ENCODE measurements at regions of chr9 and their contacts with region 1.

Region 1: GRCh38 chr9:77595426-77596095 is 52.6 kb downstream of the GNA14 start:
- DNase-seq: no peak
- H3K4me3 ChIP-seq: no peak overlapping the region
- H3K27ac ChIP-seq: no peak overlapping the region
- H3K4me1 ChIP-seq: peaks cover 0 to 13% (median 0%) of the 10 kb centered on the region in 4 donors
- H3K27me3 ChIP-seq: no peaks in the 10 kb centered on the region
- CTCF ChIP-seq: no peak

Region 2: GRCh38 chr9:77534376-77535057 is 61.0 kb before region 1 on chr9:
- intact Hi-C with region 1: loop called (anchors 2 kb)
- DNase-seq: no peak
- H3K4me3 ChIP-seq: no peak overlapping the region
- H3K27ac ChIP-seq: no peak overlapping the region
- H3K4me1 ChIP-seq: no peaks in the 10 kb centered on the region
- H3K27me3 ChIP-seq: no peaks in the 10 kb centered on the region
- CTCF ChIP-seq: no peak

Measured in tibial artery (tissue), 4 donors.